HCT116 (cell line): ENCODE measurements at regions of chr3 and their contacts with region 1.

Region 1: GRCh38 chr3:189148081-189148507 is 23.7 kb upstream of the TPRG1 start:
- DNase-seq: peak; percentile 37
- ATAC-seq: peak; percentile 85
- H3K4me3 ChIP-seq: no peak overlapping the region
- H3K27ac ChIP-seq: no peak overlapping the region
- H3K4me1 ChIP-seq: peaks cover 4 to 5% of the 10 kb centered on the region in 2 experiments; a peak in 2 of 4 replicates
- H3K27me3 ChIP-seq: no peaks in the 10 kb centered on the region
- CTCF ChIP-seq: peak; percentile 71 to 85 (median 79); a peak in 5 of 6 replicates
- POLR2A ChIP-seq: no peak
- RAD21 ChIP-seq: peak; percentile 89

Region 2: GRCh38 chr3:188830893-188831292 is 317.2 kb before region 1 on chr3:
- CTCF ChIA-PET with region 1: no interaction called
- POLR2A ChIA-PET with region 1: no interaction called
- RAD21 ChIA-PET with region 1: no interaction called
- intact Hi-C with region 1: loop called (anchors 5 kb)
- DNase-seq: no peak
- ATAC-seq: peak; percentile 64
- H3K4me3 ChIP-seq: no peak overlapping the region
- H3K27ac ChIP-seq: no peak overlapping the region
- H3K4me1 ChIP-seq: 0 out of 4 replicates have a peak, but pooled peaks cover 0 to 4% of the 10 kb centered on the region in 2 experiments
- H3K27me3 ChIP-seq: no peaks in the 10 kb centered on the region
- CTCF ChIP-seq: peak; percentile 40 to 55 (median 44); a peak in 5 of 6 replicates
- POLR2A ChIP-seq: no peak
- RAD21 ChIP-seq: peak; percentile 56

Region 3: GRCh38 chr3:189212706-189213105 is 64.6 kb after region 1 on chr3:
- CTCF ChIA-PET with region 1: no interaction called
- POLR2A ChIA-PET with region 1: no interaction called
- RAD21 ChIA-PET with region 1: no interaction called
- intact Hi-C with region 1: no loop called
- DNase-seq: no peak
- ATAC-seq: no peak
- H3K4me3 ChIP-seq: no peak overlapping the region
- H3K27ac ChIP-seq: no peak overlapping the region
- H3K4me1 ChIP-seq: no peaks in the 10 kb centered on the region
- H3K27me3 ChIP-seq: no peaks in the 10 kb centered on the region
- CTCF ChIP-seq: no peak
- POLR2A ChIP-seq: no peak
- RAD21 ChIP-seq: no peak

Region 4: DNA sequence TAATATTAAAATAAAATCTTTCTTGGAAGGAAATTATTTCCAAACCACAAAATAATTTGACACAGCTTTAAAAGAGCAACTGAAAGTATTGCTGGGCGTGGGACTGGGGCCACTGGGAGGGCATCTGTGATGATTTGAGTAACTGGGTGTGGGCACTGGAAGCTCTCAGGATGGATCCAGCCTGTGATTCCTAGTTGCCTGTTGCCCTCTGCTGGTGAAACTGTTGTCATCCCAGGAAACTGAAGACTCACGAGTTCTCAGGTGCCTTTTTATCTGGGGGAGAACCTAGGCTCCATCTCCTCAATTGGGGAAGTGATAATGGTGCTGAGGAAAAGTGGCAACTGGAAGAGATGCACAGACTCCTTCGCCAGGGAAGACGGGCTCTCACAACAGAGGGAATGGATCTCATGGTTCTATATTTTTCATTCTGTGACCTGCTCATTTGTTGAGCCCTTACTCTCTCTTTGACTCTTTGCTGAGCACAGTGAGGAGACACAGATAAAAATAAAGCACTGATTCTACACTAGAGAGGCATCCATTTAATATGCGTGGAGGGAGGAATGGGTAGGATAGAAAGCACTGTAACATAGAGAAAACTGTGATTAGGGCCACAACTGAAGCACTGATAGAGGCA is 85.2 kb after region 1 on chr3:
- CTCF ChIA-PET with region 1: no interaction called
- POLR2A ChIA-PET with region 1: no interaction called
- RAD21 ChIA-PET with region 1: no interaction called
- intact Hi-C with region 1: loop called (anchors 2 kb)
- DNase-seq: peak; percentile 70
- ATAC-seq: peak; percentile 95
- H3K4me3 ChIP-seq: no peak overlapping the region
- H3K27ac ChIP-seq: no peak overlapping the region
- H3K4me1 ChIP-seq: no peaks in the 10 kb centered on the region
- H3K27me3 ChIP-seq: no peaks in the 10 kb centered on the region
- CTCF ChIP-seq: peak; percentile 90 to 96 (median 90)
- POLR2A ChIP-seq: no peak
- RAD21 ChIP-seq: peak; percentile 95